ENCODE measurements at regions of chr10 and their contacts with region 1.

Region 1: GRCh38 chr10:102368072-102368471 is 27.4 kb upstream of the NFKB2 start:
- DNase-seq: no peak
- ATAC-seq: no peak
- H3K4me3 ChIP-seq: no peak overlapping the region
- H3K27ac ChIP-seq: no peak overlapping the region
- H3K4me1 ChIP-seq: no peaks in the 10 kb centered on the region
- H3K27me3 ChIP-seq: no peaks in the 10 kb centered on the region
- CTCF ChIP-seq: no peak

Region 2: DNA sequence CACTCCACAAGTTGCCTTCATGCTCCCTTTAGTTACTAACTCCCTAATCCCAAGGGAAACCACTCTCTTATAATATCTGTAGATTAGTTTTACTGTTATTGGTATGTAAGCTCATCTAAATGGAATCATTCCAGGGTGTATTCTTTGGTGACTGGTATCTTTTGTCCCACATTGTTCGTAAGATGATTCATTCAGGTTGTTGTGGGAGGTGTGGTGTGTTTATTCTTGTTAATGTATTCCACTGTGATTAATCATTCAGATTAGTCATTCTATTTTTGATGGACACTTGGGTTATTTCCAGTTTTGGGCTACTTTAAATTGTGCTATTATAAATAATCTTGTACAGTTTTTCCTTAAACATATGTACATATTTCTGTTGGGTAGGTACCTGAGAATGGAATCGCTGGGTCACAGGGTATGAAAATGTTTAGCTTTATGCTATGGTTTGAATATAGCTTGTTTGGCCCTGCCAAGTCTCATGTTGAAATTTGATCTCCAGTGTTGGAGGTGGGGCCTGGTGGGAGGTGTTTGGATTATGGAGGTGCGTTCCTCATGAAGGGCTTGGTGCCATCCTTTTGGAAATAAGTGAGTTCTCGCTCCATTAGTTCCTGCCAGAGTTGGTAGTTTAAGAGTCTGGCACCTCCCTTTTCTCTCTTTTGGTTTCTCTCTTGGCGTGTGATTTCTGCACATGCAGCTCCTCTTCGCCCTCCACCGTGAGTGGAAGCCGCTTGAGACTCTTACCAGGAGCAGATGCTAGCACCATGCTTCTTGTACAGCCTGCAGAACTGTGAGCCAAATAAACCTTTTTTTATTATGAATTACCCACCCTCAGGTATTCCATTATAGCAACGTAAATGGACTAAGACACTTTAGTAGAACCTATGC is 1000.3 kb before region 1 on chr10:
- intact Hi-C with region 1: no loop called
- DNase-seq: no peak
- ATAC-seq: peak in 2 of 8 donors; percentile 33 to 42
- H3K4me3 ChIP-seq: no peak overlapping the region
- H3K27ac ChIP-seq: no peak overlapping the region
- H3K4me1 ChIP-seq: peaks cover 0 to 33% (median 19%) of the 10 kb centered on the region in 9 donors
- H3K27me3 ChIP-seq: no peaks in the 10 kb centered on the region
- CTCF ChIP-seq: no peak

Region 3: DNA sequence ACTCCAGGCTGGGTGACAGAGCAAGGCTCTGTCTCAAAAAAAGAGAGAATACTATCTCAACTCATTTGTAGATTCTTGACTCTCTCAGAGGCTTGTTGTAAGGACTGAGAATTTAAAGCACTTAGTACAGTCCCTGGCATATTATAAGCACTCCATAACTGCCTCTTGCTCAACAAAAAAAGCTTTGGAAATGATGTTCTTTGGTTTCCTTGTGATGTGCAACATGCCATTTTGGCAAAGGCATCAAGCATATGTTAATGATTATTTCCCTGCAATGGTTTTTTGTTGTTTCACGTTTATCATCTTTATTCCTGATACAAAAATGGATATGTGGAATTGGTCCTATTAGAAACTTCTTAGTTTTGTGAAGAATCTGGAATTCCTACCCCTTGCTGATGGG is 200.2 kb before region 1 on chr10:
- intact Hi-C with region 1: loop called in 1 of 10 experiments (anchors 10 kb)
- DNase-seq: no peak
- ATAC-seq: no peak
- H3K4me3 ChIP-seq: no peak overlapping the region
- H3K27ac ChIP-seq: no peak overlapping the region
- H3K4me1 ChIP-seq: peaks cover 0 to 12% (median 4%) of the 10 kb centered on the region in 9 donors
- H3K27me3 ChIP-seq: no peaks in the 10 kb centered on the region
- CTCF ChIP-seq: no peak

Measured in heart right ventricle (tissue), 16 donors.